Sigmoid colon (tissue), 7 donors: ENCODE measurements at regions of chr1 and their contacts with region 1.

Region 1: GRCh38 chr1:230867903-230868735 is at the start of gene C1orf198:
- DNase-seq: peak; percentile 82
- H3K4me3 ChIP-seq: peak within 1 kb of the TSS; percentile 90 to 96 (median 92)
- H3K27ac ChIP-seq: peak within 1 kb of the TSS; percentile 90 to 95 (median 93)
- H3K4me1 ChIP-seq: peaks cover 0 to 54% (median 49%) of the 10 kb centered on the region in 4 donors
- H3K27me3 ChIP-seq: no peaks in the 10 kb centered on the region
- CTCF ChIP-seq: no peak
- EP300 ChIP-seq: no peak
- POLR2A ChIP-seq: peak; percentile 28 to 32
- total RNA-seq, gene C1orf198: 42.1 to 63.5 (median 55.5) TPM

Region 2: GRCh38 chr1:230909974-230910754 is 42.0 kb after region 1 on chr1:
- intact Hi-C with region 1: loop called (anchors 5 kb)
- DNase-seq: peak; percentile 82
- H3K4me3 ChIP-seq: no peak overlapping the region
- H3K27ac ChIP-seq: peak overlapping the region; percentile 39 to 79 (median 58)
- H3K4me1 ChIP-seq: peaks cover 0 to 51% (median 37%) of the 10 kb centered on the region in 4 donors
- H3K27me3 ChIP-seq: no peaks in the 10 kb centered on the region
- CTCF ChIP-seq: no peak
- EP300 ChIP-seq: no peak
- POLR2A ChIP-seq: no peak

Region 3: GRCh38 chr1:230978491-230979388 is 110.6 kb after region 1 on chr1 and contains the starts of genes ARV1 and TTC13:
- intact Hi-C with region 1: loop called (anchors 1 kb)
- DNase-seq: peak; percentile 98
- H3K4me3 ChIP-seq: peak within 1 kb of the TSS; percentile 65 to 95 (median 90)
- H3K27ac ChIP-seq: peak within 1 kb of the TSS; percentile 71 to 83 (median 80)
- H3K4me1 ChIP-seq: peaks cover 0 to 27% (median 17%) of the 10 kb centered on the region in 4 donors
- H3K27me3 ChIP-seq: no peaks in the 10 kb centered on the region
- CTCF ChIP-seq: no peak
- EP300 ChIP-seq: no peak
- POLR2A ChIP-seq: peak; percentile 25 to 76
- total RNA-seq, gene ARV1: 19.7 to 32.1 (median 22.8) TPM
- total RNA-seq, gene TTC13: 7.3 to 19.7 (median 16.3) TPM